Posterior cingulate gyrus (tissue), 11 donors: ENCODE measurements at regions of chr2 and their contacts with region 1.

Region 1: DNA sequence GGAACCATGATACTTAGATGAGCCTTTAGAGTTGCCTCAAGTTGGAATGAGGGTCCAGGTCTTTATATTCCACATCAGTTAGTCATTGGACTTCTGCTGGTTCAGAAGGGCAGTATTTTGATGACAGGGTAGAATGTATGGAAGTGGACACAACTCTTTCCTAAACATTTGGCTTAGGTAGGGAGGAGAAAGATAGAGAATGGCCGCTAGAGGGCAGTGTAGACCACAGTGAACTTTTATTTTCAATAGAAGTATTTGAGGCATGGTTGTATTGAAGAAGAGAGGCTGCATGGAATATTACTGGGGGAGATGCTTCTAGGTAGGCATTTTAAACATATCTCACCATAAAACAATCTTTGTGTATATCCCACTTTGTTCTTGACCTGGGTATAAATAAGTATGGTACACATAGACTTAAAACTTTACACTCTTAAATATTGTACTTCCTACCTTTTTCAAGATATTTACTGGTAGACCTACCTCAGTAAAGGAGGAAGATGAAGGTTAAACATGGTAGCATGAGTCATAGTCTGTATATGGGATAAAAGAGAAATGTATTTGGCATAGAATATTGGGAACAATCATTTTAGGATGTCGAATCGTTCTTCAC is 497.6 kb upstream of the FAM98A start:
- DNase-seq: peak in 5 of 10 donors; percentile 14 to 65 (median 54)

Region 2: GRCh38 chr2:33681369-33681757 is 415.3 kb before region 1 on chr2:
- intact Hi-C with region 1: loop called (anchors 10 kb)
- DNase-seq: no peak

Region 3: GRCh38 chr2:35410431-35411061 is 1313.9 kb after region 1 on chr2:
- intact Hi-C with region 1: loop called (anchors 2 kb)
- DNase-seq: peak; percentile 19 to 94 (median 70)